Activated CD4-positive, alpha-beta T cell treated with anti-CD3 and anti-CD28 coated beads for 36 hours (primary cell): ENCODE measurements at regions of chr6 and their contacts with region 1.

Region 1: DNA sequence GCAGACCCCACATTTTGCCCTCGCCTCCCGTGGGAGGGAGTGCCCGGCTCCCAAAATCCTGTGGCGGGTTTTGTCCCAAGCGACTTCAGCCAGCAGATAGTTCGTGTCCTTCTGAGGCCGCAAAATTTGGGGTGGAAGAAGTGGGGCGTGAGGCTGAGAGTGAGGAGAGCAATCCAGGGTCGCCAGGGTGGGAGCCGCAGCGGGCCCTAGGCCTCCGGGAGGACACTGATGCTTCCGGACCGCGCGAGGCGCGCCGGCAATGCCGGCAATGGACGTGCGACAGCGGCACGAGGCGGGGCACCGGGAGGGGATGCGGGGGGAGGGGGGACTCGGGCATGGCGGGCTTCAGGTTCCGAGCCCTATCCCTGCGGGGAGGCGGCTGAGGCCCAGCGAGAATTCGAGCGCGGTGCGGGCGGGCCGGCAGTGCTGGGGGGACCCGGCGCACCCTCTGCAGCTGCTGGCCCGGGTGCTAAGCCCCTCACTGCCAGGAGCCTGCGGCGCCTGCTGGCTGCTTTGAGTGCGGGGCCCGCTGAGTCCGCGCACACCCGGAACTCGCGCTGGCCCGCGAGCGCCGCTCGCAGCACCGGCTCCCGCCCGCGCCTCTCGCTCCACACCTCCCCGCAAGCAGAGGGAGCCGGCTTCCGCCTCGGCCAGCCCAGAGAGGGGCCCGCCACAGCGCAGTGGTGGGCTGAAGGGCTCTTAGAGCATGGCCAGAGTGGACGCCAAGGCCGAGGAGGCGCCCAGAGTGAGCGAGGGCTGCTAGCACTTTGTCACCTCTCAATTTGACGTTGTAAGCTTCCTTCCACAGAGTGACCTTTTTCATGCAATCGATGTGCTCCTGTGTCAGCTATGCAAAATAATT is 143.8 kb downstream of the LPA start:
- DNase-seq: peak; percentile 83
- ATAC-seq: peak; percentile 76
- H3K4me3 Mint-ChIP-seq: peak overlapping the region; percentile 79
- H3K27ac Mint-ChIP-seq: peak overlapping the region; percentile 80
- H3K4me1 Mint-ChIP-seq: peaks cover 25% of the 10 kb centered on the region
- H3K27me3 Mint-ChIP-seq: peaks cover 5% of the 10 kb centered on the region

Region 2: GRCh38 chr6:159616456-159616855 is 903.8 kb before region 1 on chr6:
- CTCF ChIA-PET with region 1: no interaction called
- POLR2A ChIA-PET with region 1: no interaction called
- intact Hi-C with region 1: no loop called
- DNase-seq: no peak
- ATAC-seq: no peak
- H3K4me3 Mint-ChIP-seq: no peak overlapping the region
- H3K27ac Mint-ChIP-seq: no peak overlapping the region
- H3K4me1 Mint-ChIP-seq: no peaks in the 10 kb centered on the region
- H3K27me3 Mint-ChIP-seq: no peaks in the 10 kb centered on the region

Region 3: DNA sequence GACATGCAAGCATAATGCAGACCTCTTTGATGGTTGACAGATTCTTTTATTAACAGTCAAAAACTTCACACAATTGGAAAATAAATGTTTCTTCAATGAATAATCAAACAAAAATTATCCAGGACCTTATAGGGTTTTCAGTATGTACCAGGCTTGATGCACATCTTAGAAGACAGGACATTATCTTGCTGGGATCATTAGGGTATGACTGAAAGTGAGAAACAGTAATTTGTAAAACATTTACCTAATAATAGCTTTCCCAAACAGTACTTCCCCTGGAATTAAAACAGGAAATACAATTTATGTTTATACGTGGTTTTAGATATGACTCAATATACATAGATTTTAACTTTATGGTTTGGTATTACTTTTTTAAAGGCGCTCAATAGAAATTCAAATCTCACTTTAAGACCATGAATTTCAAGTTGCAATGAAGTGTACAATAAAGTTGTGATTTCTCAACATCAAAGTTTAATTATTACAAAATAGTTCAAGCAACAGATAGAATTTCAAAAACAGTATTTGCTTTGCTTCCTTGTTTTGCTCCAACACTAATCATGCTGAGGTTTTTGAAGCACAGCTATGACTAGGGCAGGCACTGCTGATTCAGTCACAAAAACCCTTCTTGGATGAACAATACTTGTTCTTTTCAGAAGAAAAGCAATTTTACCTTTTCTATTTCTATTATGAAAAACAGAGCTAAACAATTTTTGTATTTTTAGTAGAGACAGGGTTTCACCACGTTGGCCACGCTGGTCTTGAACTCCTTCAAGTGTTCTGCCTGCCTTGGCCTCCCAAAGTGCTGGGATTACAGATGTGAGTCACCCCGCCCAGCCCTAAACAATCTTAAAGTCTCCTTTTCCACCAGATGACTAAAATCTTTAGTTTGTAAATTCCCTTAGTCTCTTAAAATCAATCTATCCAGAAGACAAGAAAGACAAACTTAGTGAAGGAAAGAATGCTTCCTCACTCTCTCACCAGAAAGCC is 840.9 kb before region 1 on chr6:
- CTCF ChIA-PET with region 1: no interaction called
- POLR2A ChIA-PET with region 1: no interaction called
- intact Hi-C with region 1: loop called in 1 of 2 experiments (anchors 10 kb)
- DNase-seq: peak; percentile 67
- ATAC-seq: peak; percentile 75
- H3K4me3 Mint-ChIP-seq: no peak overlapping the region
- H3K27ac Mint-ChIP-seq: peak overlapping the region; percentile 73
- H3K4me1 Mint-ChIP-seq: peaks cover 37% of the 10 kb centered on the region
- H3K27me3 Mint-ChIP-seq: no peaks in the 10 kb centered on the region

Region 4: DNA sequence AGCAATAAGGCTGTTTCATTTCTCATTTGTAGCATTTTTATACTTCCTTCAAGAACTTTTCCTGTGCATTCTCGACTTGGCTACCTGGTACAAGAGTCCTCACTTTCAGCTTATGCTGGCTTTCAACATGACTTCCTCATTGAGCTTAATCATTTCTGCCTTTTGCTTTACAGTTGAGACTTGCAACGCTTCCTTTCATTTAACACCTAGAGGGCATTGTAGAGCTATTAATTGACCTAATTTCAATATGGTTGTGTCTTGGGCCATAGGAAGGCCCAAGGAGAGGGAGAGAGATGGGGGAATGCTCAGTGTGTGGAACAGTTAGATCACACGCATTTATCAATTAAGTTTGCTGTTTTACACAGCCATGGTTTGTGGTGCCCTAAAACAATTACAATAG is 298.9 kb before region 1 on chr6:
- CTCF ChIA-PET with region 1: interaction called, 3 read pairs
- POLR2A ChIA-PET with region 1: no interaction called
- intact Hi-C with region 1: loop called in 1 of 2 experiments (anchors 1 kb)
- DNase-seq: no peak
- ATAC-seq: peak; percentile 30
- H3K4me3 Mint-ChIP-seq: no peak overlapping the region
- H3K27ac Mint-ChIP-seq: no peak overlapping the region
- H3K4me1 Mint-ChIP-seq: peaks cover 10% of the 10 kb centered on the region
- H3K27me3 Mint-ChIP-seq: peaks cover 31% of the 10 kb centered on the region

Region 5: DNA sequence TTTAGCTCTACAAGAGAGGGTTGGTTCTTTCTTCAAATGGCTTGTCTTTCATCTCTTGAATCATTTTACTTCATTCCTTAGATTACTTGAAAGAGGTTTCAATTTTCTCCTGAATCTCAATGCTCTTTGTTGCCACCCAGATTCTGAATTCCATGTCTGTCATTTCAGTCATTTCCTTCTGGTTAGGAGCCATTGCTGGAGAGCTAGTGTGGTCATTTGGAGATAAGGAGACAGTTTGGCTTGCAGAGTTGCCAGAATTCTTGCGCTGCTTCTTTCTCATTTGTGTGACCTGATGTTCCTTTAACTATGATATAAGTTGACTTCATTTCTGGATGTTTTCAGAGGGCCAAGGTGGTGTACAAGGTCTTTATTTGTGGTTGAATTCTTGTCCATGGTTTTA is 14.3 kb before region 1 on chr6:
- CTCF ChIA-PET with region 1: interaction called, 10 read pairs
- POLR2A ChIA-PET with region 1: interaction called, 3 read pairs
- intact Hi-C with region 1: no loop called
- DNase-seq: no peak
- ATAC-seq: no peak
- H3K4me3 Mint-ChIP-seq: no peak overlapping the region
- H3K27ac Mint-ChIP-seq: no peak overlapping the region
- H3K4me1 Mint-ChIP-seq: no peaks in the 10 kb centered on the region
- H3K27me3 Mint-ChIP-seq: no peaks in the 10 kb centered on the region

Region 6: GRCh38 chr6:160667639-160668481 is 147.6 kb after region 1 on chr6:
- CTCF ChIA-PET with region 1: interaction called, 3 read pairs
- POLR2A ChIA-PET with region 1: no interaction called
- intact Hi-C with region 1: loop called (anchors 1 to 5 kb)
- DNase-seq: peak; percentile 70
- ATAC-seq: peak; percentile 47
- H3K4me3 Mint-ChIP-seq: no peak overlapping the region
- H3K27ac Mint-ChIP-seq: no peak overlapping the region
- H3K4me1 Mint-ChIP-seq: no peaks in the 10 kb centered on the region
- H3K27me3 Mint-ChIP-seq: peaks cover 6% of the 10 kb centered on the region

Region 7: DNA sequence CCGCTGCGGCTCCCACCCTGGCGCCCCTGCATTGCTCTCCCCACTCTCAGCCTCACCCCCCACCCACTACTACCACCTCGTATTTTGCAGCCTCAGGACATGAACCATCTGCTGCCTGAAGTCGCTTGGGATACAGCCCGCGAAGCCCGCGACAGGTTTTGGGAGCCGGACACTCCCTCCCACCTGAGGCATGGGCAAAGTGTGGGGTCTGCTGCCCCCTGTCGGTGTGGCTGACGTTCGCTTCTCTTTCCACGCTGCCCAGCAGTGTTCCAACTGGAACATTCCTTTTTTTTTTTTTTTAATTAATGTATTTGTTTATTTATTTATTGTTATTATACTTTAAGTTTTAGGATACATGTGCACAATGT is 159.1 kb after region 1 on chr6:
- CTCF ChIA-PET with region 1: no interaction called
- POLR2A ChIA-PET with region 1: no interaction called
- intact Hi-C with region 1: no loop called
- DNase-seq: peak; percentile 16
- ATAC-seq: no peak
- H3K4me3 Mint-ChIP-seq: no peak overlapping the region
- H3K27ac Mint-ChIP-seq: no peak overlapping the region
- H3K4me1 Mint-ChIP-seq: no peaks in the 10 kb centered on the region
- H3K27me3 Mint-ChIP-seq: peaks cover 22% of the 10 kb centered on the region

Region 8: GRCh38 chr6:160992061-160992979 is 472.0 kb after region 1 on chr6:
- CTCF ChIA-PET with region 1: no interaction called
- POLR2A ChIA-PET with region 1: no interaction called
- intact Hi-C with region 1: loop called in 1 of 2 experiments (anchors 2 kb)
- DNase-seq: peak; percentile 45
- ATAC-seq: peak; percentile 61
- H3K4me3 Mint-ChIP-seq: peak overlapping the region; percentile 93
- H3K27ac Mint-ChIP-seq: peak overlapping the region; percentile 83
- H3K4me1 Mint-ChIP-seq: peaks cover 37% of the 10 kb centered on the region
- H3K27me3 Mint-ChIP-seq: no peaks in the 10 kb centered on the region

Region 9: DNA sequence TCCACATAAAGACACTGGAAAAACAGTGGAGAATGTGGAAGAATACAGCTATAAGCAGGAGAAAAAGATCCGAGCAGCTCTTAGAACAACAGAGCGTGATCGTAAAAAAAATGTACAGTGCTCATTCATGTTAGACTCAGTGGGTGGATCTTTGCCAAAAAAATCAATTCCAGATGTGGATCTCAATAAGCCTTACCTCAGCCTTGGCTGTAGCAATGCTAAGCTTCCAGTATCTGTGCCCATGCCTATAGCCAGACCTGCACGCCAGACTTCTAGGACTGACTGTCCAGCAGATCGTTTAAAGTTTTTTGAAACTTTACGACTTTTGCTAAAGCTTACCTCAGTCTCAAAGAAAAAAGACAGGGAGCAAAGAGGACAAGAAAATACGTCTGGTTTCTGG is 528.4 kb after region 1 on chr6:
- CTCF ChIA-PET with region 1: no interaction called
- POLR2A ChIA-PET with region 1: no interaction called
- intact Hi-C with region 1: no loop called
- DNase-seq: no peak
- ATAC-seq: no peak
- H3K4me3 Mint-ChIP-seq: no peak overlapping the region
- H3K27ac Mint-ChIP-seq: no peak overlapping the region
- H3K4me1 Mint-ChIP-seq: peaks cover 23% of the 10 kb centered on the region
- H3K27me3 Mint-ChIP-seq: no peaks in the 10 kb centered on the region